BJ (cell line): ENCODE measurements at regions of chr3 and their contacts with region 1.

Region 1: GRCh38 chr3:59040902-59041301 is 8.9 kb downstream of the CFAP20DC start:
- DNase-seq: no peak
- H3K4me3 ChIP-seq: no peak overlapping the region
- H3K27me3 ChIP-seq: no peaks in the 10 kb centered on the region
- CTCF ChIP-seq: no peak

Region 2: GRCh38 chr3:58059349-58060321 is 981.3 kb before region 1 on chr3:
- CTCF ChIA-PET with region 1: no interaction called
- POLR2A ChIA-PET with region 1: interaction called, 19 read pairs
- DNase-seq: peak; percentile 76
- H3K4me3 ChIP-seq: no peak overlapping the region
- H3K27me3 ChIP-seq: no peaks in the 10 kb centered on the region
- CTCF ChIP-seq: no peak

Region 3: DNA sequence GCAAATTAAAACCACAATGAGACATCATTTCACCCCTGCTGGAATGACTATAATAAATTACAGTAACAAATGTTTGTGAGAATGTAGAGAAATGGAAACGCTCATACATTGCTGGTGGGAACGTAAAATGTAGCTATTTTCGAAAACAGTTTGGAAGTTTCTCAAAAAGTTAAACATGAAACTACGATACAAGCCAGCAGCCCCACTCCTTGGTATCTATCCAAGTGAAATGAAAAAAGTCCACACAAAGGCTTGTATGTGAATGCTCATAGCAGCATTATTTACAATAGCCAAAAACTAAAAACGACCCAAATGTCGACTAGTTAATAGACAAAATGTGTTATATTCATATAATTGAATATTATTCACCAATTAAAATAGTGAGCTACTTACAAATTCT is 31.8 kb after region 1 on chr3:
- CTCF ChIA-PET with region 1: no interaction called
- POLR2A ChIA-PET with region 1: no interaction called
- DNase-seq: no peak
- H3K4me3 ChIP-seq: no peak overlapping the region
- H3K27me3 ChIP-seq: peaks cover 2% of the 10 kb centered on the region; the same call in 1 of the 2 replicates
- CTCF ChIP-seq: no peak